GM18951 (cell line): ENCODE measurements at regions of chr3 and their contacts with region 1.

Region 1: DNA sequence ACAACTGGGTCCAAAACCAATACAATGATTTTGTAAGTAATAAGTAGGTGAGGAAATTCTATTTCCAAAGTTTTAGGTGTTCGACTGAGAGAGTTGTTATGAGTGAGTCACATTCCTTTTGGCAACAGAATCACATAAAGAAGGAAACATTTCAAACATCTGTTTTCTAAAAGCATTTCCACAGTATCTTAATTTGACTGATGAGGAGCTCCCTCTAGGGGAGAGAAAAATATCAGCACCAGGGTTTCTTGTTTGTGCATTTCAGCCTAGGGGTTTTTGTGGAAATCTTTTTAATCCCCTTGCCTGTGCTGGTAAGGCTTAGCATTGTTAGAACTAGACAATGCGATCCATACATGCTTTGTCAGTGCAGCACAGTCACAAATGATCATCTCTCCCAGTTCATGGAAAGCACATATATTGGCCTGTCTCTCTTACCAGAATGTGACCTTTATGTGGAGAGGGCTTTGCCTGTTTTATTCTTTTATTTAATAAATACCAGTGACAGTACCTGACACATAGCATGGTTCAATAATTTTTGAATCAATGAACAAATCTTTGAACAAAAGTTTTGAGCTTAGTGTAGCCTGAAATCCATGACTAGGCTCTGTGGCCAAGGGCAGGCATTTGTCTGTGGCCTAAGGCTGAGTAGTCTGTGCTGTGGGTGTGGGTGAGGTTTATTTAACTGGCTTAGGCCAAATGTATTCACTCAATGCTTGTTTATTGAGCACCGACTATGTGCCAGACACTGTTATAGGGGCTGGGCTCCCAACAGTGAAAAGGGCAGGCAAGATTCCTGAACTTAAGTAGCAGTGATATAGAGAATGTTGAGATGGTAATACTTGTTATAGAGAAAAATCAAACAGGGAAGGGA is 21.1 kb upstream of the IQCF6 start:
- POLR2A ChIP-seq: no peak

Region 2: GRCh38 chr3:51718547-51719409 is 81.3 kb before region 1 on chr3:
- in situ Hi-C with region 1: loop called (anchors 10 kb)
- POLR2A ChIP-seq: no peak